ENCODE measurements at regions of chr2 and their contacts with region 1.

Region 1: GRCh38 chr2:222057347-222058073 is 241.3 kb downstream of the PAX3 start:
- DNase-seq: no peak
- H3K4me3 ChIP-seq: no peak overlapping the region
- H3K27ac ChIP-seq: no peak overlapping the region
- H3K4me1 ChIP-seq: peaks cover 0 to 6% (median 2%) of the 10 kb centered on the region in 4 experiments; a peak in 3 of 7 replicates
- H3K27me3 ChIP-seq: peaks cover 15 to 41% (median 30%) of the 10 kb centered on the region in 4 experiments
- CTCF ChIP-seq: peak in 2 of 3 experiments; percentile 32 to 46; a peak in 2 of 4 replicates
- EP300 ChIP-seq: no peak
- POLR2A ChIP-seq: no peak
- RAD21 ChIP-seq: peak; percentile 82 to 86

Region 2: GRCh38 chr2:222024932-222025880 is 32.3 kb before region 1 on chr2:
- CTCF ChIA-PET with region 1: interaction called, 70 read pairs
- POLR2A ChIA-PET with region 1: interaction called, 4 read pairs
- DNase-seq: no peak
- H3K4me3 ChIP-seq: peak overlapping the region in 3 of 4 experiments; percentile 9 to 45 (median 30); a peak in 5 of 8 replicates
- H3K27ac ChIP-seq: no peak overlapping the region
- H3K4me1 ChIP-seq: peaks cover 0 to 4% (median 2%) of the 10 kb centered on the region in 4 experiments; a peak in 4 of 7 replicates
- H3K27me3 ChIP-seq: peaks cover 0 to 8% (median 5%) of the 10 kb centered on the region in 4 experiments; a peak in 3 of 7 replicates
- CTCF ChIP-seq: peak in 2 of 3 experiments; percentile 38 to 68; a peak in 2 of 4 replicates
- EP300 ChIP-seq: peak in 1 of 2 experiments; percentile 54; a peak in 1 of 3 replicates
- POLR2A ChIP-seq: no peak
- RAD21 ChIP-seq: peak; percentile 81 to 83

Region 3: GRCh38 chr2:222043891-222044290 is 13.6 kb before region 1 on chr2:
- CTCF ChIA-PET with region 1: interaction called, 95 read pairs
- POLR2A ChIA-PET with region 1: interaction called, 3 read pairs
- DNase-seq: no peak
- H3K4me3 ChIP-seq: no peak overlapping the region
- H3K27ac ChIP-seq: no peak overlapping the region
- H3K4me1 ChIP-seq: no peaks in the 10 kb centered on the region
- H3K27me3 ChIP-seq: peaks cover 2 to 3% (median 2%) of the 10 kb centered on the region in 4 experiments; a peak in 5 of 7 replicates
- CTCF ChIP-seq: no peak
- EP300 ChIP-seq: no peak
- POLR2A ChIP-seq: no peak
- RAD21 ChIP-seq: no peak

Region 4: DNA sequence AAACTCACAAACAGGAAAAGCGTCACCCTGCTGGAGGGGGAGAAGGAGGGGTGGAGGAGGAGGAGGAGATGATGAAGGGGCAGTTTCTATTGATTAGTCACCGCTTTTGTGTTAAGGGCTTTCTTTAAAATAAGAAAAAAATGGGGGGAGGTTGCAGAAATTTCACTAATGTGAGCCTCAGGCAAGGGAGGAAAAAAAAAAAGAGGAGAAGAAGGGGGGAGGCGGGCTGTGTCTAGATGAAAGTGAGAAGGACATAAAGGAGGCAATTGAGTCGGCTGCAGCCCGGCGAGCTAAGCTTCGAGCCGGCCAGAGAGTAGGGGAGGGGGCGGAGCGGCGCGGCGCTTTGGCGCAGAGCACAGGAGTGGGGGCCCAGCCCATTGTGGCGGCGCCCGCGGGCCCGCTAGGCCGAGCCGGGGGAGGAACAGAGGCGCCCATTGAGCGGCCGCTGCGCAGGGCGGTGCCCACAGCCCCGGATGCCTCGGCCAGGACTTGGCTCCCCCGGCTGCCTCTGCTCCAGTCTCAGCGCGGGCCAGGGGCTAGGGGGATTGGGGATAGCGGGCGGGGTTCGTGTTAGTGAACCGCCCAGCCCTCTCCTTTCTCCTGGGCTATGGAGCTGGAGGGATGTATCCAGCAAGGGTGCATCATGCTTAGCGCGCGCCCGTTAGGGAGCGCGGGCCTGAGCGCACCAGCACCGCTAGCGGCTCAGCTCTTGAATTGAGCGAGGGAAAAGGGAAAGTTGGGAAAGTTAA is 233.4 kb after region 1 on chr2:
- CTCF ChIA-PET with region 1: interaction called, 16 read pairs
- POLR2A ChIA-PET with region 1: no interaction called
- DNase-seq: peak; percentile 69 to 86
- H3K4me3 ChIP-seq: peak overlapping the region; percentile 16 to 56 (median 30); a peak in 6 of 8 replicates
- H3K27ac ChIP-seq: no peak overlapping the region
- H3K4me1 ChIP-seq: peaks cover 13 to 29% (median 20%) of the 10 kb centered on the region in 4 experiments
- H3K27me3 ChIP-seq: peaks cover 66 to 97% (median 84%) of the 10 kb centered on the region in 4 experiments
- CTCF ChIP-seq: peak in 1 of 3 experiments; percentile 19; a peak in 1 of 4 replicates
- EP300 ChIP-seq: peak in 1 of 2 experiments; percentile 10; a peak in 1 of 3 replicates
- POLR2A ChIP-seq: no peak
- RAD21 ChIP-seq: peak; percentile 20 to 21; a peak in 2 of 4 replicates

Region 5: GRCh38 chr2:222318026-222318711 is 260.7 kb after region 1 on chr2:
- CTCF ChIA-PET with region 1: interaction called, 13 read pairs
- POLR2A ChIA-PET with region 1: no interaction called
- DNase-seq: peak in 1 of 2 experiments; percentile 89
- H3K4me3 ChIP-seq: peak overlapping the region; percentile 41 to 62 (median 52); a peak in 7 of 8 replicates
- H3K27ac ChIP-seq: no peak overlapping the region
- H3K4me1 ChIP-seq: peaks cover 0 to 9% (median under 1%) of the 10 kb centered on the region in 4 experiments; a peak in 5 of 7 replicates
- H3K27me3 ChIP-seq: peaks cover 66 to 91% (median 79%) of the 10 kb centered on the region in 4 experiments
- CTCF ChIP-seq: peak in 2 of 3 experiments; percentile 17 to 33; a peak in 2 of 4 replicates
- EP300 ChIP-seq: no peak
- POLR2A ChIP-seq: no peak
- RAD21 ChIP-seq: peak; percentile 51 to 59